Activated T-helper 1 cell treated with anti-CD3 and anti-CD28 coated beads, Interleukin-12 subunit alpha, Interleukin-12 subunit beta, Interleukin-2, Interleukin-4 antibody, amounts not matched to agents 30 ng/mL and 10 ng/mL and 1 ng/mL, durations not matched to agents 14 hours and 24 hours and 36 hours (primary cell): ENCODE measurements at regions of chr10 and their contacts with region 1.

Region 1: DNA sequence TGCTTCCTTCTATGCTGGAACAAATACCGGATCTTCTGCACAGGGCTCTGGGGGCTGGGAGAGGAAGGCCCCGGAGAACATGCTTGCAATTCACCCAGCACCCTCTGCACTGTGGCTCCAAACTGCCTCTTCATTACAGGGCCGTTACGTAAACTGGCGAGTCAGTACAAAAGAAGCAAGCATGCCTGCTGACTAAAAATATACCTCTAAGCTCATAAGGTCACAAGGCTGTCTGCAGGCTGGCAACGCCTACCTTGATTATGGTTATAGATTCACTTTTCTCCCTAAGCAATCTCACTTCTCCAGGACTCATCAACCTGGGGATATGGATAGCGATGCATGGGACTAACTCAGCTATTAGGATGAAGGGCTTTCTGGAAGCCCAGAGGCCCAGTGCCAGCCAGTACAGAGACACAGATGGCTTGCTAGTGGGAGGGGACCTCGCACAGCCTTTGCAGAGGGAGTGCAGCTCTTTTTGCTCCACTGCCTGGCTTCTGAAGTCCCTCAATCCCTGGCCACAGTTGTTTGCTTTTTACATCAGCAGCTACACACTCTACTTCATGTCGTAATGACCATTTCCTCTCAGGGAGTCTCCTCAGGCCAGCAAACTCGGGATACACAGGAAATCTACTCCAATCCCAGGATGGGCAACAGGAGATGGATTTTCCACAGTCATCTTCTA is 96.1 kb downstream of the SH3PXD2A start:
- DNase-seq: peak; percentile 49
- H3K4me3 Mint-ChIP-seq: peak overlapping the region; percentile 69
- H3K27ac Mint-ChIP-seq: peak overlapping the region; percentile 92
- H3K4me1 Mint-ChIP-seq: peaks cover 66% of the 10 kb centered on the region
- H3K27me3 Mint-ChIP-seq: peaks cover 8% of the 10 kb centered on the region

Region 2: GRCh38 chr10:103696411-103697145 is 62.7 kb before region 1 on chr10:
- intact Hi-C with region 1: loop called (anchors 2 kb)
- DNase-seq: peak; percentile 71
- H3K4me3 Mint-ChIP-seq: peak overlapping the region; percentile 52
- H3K27ac Mint-ChIP-seq: peak overlapping the region; percentile 91
- H3K4me1 Mint-ChIP-seq: peaks cover 25% of the 10 kb centered on the region
- H3K27me3 Mint-ChIP-seq: peaks cover 3% of the 10 kb centered on the region

Region 3: GRCh38 chr10:103745341-103746227 is 13.7 kb before region 1 on chr10:
- intact Hi-C with region 1: loop called (anchors 1 kb)
- DNase-seq: peak; percentile 47
- H3K4me3 Mint-ChIP-seq: peak overlapping the region; percentile 73
- H3K27ac Mint-ChIP-seq: peak overlapping the region; percentile 94
- H3K4me1 Mint-ChIP-seq: peaks cover 66% of the 10 kb centered on the region
- H3K27me3 Mint-ChIP-seq: no peaks in the 10 kb centered on the region

Region 4: DNA sequence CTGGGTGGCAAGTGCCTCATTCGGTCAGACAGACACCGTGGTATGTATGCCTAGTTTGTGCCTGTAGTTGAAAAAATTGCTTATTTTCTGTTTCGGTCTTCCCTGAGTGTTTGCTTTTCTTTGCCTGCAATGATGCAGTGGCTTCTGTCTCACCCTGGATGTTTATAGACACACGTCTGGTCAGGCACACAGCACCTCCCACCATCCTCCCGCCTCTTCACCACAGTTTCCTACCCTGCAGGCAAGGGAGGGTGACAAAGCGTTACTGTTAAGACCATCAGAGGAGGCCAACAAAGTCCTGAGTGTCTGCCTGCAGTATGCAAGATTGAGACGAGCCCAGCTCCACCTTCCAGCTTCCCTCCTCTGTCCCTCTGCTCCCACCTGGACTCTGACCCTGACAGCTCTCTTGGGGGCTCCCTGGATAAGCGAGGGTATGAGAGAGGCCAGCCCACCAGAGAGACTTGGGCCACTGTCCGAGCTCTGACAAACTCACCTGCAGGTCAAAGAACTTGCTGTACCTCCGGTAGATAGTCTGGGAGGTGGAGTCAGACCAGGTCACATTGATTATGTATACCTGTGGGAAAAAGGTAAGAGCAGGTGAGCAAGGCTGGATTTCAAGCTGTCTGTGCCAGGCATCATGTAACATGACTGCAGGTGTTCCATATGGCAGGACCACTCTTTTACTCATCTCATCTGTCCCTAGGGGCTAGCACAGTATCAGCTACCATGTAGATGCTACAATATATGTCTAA is 41.7 kb after region 1 on chr10:
- intact Hi-C with region 1: loop called (anchors 1 kb)
- DNase-seq: peak; percentile 64
- H3K4me3 Mint-ChIP-seq: peak overlapping the region; percentile 65
- H3K27ac Mint-ChIP-seq: peak overlapping the region; percentile 80
- H3K4me1 Mint-ChIP-seq: peaks cover 31% of the 10 kb centered on the region
- H3K27me3 Mint-ChIP-seq: peaks cover 3% of the 10 kb centered on the region

Region 5: DNA sequence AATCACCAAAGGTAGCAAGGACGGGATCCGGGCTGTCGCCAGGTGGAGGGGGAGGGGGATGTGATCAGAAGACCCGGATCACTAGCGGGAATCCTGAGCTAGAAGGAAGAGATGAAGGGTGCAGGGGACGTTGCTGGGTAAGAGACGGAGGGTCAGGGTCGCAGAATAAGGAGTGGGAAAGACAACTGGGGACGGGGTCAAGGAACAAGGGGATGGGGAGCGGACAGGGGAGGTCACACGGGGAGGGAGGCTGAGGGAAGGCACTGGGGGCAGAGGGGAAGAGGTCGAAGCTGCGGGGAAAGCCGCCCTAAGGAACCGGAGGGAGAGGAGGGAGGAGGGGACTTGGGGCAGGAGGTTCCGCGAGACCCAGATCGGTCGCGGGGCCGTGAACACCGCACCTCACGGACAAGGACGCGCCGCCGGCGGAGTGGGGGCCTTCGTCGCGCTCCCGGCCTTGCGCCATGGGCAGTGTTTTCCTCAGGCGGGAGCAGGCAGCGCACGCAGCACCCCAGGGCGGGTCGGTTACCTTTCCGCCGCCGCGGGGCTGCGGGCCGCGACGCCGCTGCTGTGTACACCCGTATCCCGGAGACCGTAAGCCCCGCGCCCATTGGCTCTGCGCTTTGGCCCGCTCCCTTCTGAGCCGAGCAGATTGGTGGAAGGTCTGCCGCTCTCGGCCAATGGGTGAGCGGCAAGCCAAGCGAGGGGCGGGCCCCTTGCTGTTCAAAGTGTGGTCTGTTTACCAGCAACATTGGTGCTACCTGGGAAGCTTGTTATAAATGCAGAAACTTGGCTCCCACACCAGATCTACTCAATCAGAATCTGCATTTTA is 472.8 kb after region 1 on chr10 and contains the start of gene CFAP43:
- intact Hi-C with region 1: loop called (anchors 10 kb)
- DNase-seq: peak; percentile 99
- H3K4me3 Mint-ChIP-seq: peak within 1 kb of the TSS; percentile 82
- H3K27ac Mint-ChIP-seq: peak within 1 kb of the TSS; percentile 63
- H3K4me1 Mint-ChIP-seq: peaks cover 12% of the 10 kb centered on the region
- H3K27me3 Mint-ChIP-seq: peaks cover 33% of the 10 kb centered on the region
- total RNA-seq, gene CFAP43: not detected in 2 replicates